ENCODE measurements at regions of chr17 and their contacts with region 1.

Region 1: GRCh38 chr17:58112970-58113631 is 29.9 kb downstream of the DYNLL2 start:
- DNase-seq: peak; percentile 72 to 90
- ATAC-seq: peak; percentile 83 to 99 (median 97)
- H3K4me3 ChIP-seq: no peak overlapping the region
- H3K4me3 Mint-ChIP-seq: no peak overlapping the region
- H3K27ac ChIP-seq: no peak overlapping the region
- H3K27ac Mint-ChIP-seq: no peak overlapping the region
- H3K4me1 ChIP-seq: no peaks in the 10 kb centered on the region
- H3K4me1 Mint-ChIP-seq: no peaks in the 10 kb centered on the region
- H3K27me3 ChIP-seq: no peaks in the 10 kb centered on the region
- H3K27me3 Mint-ChIP-seq: peaks cover 0 to 10% of the 10 kb centered on the region in 2 donors
- CTCF ChIP-seq: peak; percentile 94

Region 2: GRCh38 chr17:57858838-57859237 is 254.3 kb before region 1 on chr17:
- intact Hi-C with region 1: loop called (anchors 1 kb)
- DNase-seq: no peak
- ATAC-seq: no peak
- H3K4me3 ChIP-seq: no peak overlapping the region
- H3K4me3 Mint-ChIP-seq: no peak overlapping the region
- H3K27ac ChIP-seq: no peak overlapping the region
- H3K27ac Mint-ChIP-seq: no peak overlapping the region
- H3K4me1 ChIP-seq: peaks cover 14% of the 10 kb centered on the region
- H3K4me1 Mint-ChIP-seq: peaks cover 0 to 8% of the 10 kb centered on the region in 2 donors
- H3K27me3 ChIP-seq: peaks cover 11% of the 10 kb centered on the region
- H3K27me3 Mint-ChIP-seq: peaks cover 27 to 32% of the 10 kb centered on the region in 2 donors
- CTCF ChIP-seq: no peak

Region 3: DNA sequence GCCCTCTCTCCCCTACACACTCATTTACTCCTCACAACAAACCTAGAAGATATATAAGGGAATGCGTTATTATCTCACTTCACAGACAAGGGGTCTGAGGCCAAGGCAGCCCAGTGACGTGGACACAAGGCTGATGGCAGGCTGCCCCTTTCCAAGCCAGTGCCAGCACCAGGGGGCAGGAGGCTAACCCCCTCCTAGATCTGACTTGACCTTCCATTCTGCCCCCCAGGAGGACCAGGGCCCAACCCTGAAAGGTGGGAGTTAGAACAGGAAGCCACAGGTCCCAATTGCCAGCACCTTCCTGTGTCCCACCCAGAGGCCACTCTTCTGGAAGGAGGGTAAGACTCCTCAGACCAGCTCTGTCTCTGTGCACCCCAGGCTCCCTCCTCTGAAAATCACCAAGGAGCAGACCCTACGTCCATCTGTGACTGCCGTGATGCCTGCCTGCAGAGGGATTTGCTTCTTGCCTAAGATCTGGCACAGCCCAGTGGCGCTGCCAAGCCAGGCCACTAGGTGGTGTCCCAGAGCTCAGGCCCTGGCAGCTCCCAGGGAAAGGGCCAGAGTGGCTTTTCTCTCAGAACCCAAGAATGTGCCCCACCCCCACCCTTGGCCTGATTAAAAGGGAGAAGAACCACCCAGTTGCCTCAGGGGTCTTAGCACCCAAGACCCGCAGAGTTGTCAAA is 220.8 kb before region 1 on chr17:
- intact Hi-C with region 1: loop called (anchors 1 kb)
- DNase-seq: peak; percentile 72 to 84
- ATAC-seq: peak; percentile 87 to 95 (median 90)
- H3K4me3 ChIP-seq: no peak overlapping the region
- H3K4me3 Mint-ChIP-seq: no peak overlapping the region
- H3K27ac ChIP-seq: no peak overlapping the region
- H3K27ac Mint-ChIP-seq: peak overlapping the region in 1 of 2 donors; percentile 78
- H3K4me1 ChIP-seq: peaks cover 17% of the 10 kb centered on the region
- H3K4me1 Mint-ChIP-seq: peaks cover 11 to 15% of the 10 kb centered on the region in 2 donors
- H3K27me3 ChIP-seq: no peaks in the 10 kb centered on the region
- H3K27me3 Mint-ChIP-seq: peaks cover 0 to 2% of the 10 kb centered on the region in 2 donors
- CTCF ChIP-seq: peak; percentile 88

Region 4: GRCh38 chr17:58148609-58149008 is 35.5 kb after region 1 on chr17:
- intact Hi-C with region 1: no loop called
- DNase-seq: no peak
- ATAC-seq: no peak
- H3K4me3 ChIP-seq: no peak overlapping the region
- H3K4me3 Mint-ChIP-seq: no peak overlapping the region
- H3K27ac ChIP-seq: no peak overlapping the region
- H3K27ac Mint-ChIP-seq: no peak overlapping the region
- H3K4me1 ChIP-seq: peaks cover 17% of the 10 kb centered on the region
- H3K4me1 Mint-ChIP-seq: peaks cover 21 to 28% of the 10 kb centered on the region in 2 donors
- H3K27me3 ChIP-seq: no peaks in the 10 kb centered on the region
- H3K27me3 Mint-ChIP-seq: no peaks in the 10 kb centered on the region
- CTCF ChIP-seq: no peak